AG04449 (cell line): ENCODE measurements at regions of chr21 and their contacts with region 1.

Region 1: GRCh38 chr21:23936224-23936623 is 1671.1 kb downstream of the MRPL39 start:
- DNase-seq: peak; percentile 5
- H3K4me3 ChIP-seq: no peak overlapping the region
- CTCF ChIP-seq: peak; percentile 62

Region 2: GRCh38 chr21:23949493-23949892 is 13.3 kb after region 1 on chr21:
- CTCF ChIA-PET with region 1: interaction called, 11 read pairs
- POLR2A ChIA-PET with region 1: no interaction called
- DNase-seq: no peak
- H3K4me3 ChIP-seq: no peak overlapping the region
- CTCF ChIP-seq: no peak

Region 3: GRCh38 chr21:23977971-23978370 is 41.7 kb after region 1 on chr21:
- CTCF ChIA-PET with region 1: no interaction called
- POLR2A ChIA-PET with region 1: no interaction called
- DNase-seq: peak; percentile 5
- H3K4me3 ChIP-seq: no peak overlapping the region
- CTCF ChIP-seq: no peak